Endothelial cell of umbilical vein (primary cell): ENCODE measurements at regions of chr7 and their contacts with region 1.

Region 1: DNA sequence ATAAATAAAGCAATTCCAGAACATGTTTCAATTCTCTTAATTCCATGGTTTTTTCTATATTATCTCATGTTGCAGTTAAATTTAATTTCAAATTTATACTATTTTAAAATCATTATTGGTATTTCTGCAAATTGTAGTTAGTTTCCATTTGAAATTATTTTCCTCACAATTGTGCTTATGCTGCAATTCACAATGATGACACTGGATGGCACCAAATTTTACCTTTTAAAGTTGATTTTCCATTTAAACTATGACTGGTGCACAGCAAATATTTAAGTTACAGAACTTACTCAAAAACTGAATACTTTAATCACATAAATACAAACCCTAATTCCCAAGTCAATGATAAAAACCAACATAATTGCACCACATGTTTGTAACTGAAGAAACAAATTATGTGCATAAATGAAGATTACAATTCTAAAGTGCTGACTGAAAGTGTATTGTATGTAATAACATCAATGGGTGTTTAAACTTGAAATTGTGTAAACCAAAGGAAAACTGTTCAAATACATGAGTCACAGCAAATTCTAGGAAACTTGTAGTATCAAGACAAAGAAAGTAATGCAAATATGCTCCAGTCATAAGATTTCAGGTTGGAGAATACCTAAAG is 75.3 kb upstream of the AASS start:
- DNase-seq: peak; percentile 56
- H3K4me3 ChIP-seq: no peak overlapping the region
- H3K27ac ChIP-seq: no peak overlapping the region
- H3K4me1 ChIP-seq: no peaks in the 10 kb centered on the region
- H3K27me3 ChIP-seq: no peaks in the 10 kb centered on the region
- CTCF ChIP-seq: peak; percentile 30 to 33
- POLR2A ChIP-seq: no peak

Region 2: GRCh38 chr7:122014697-122015096 is 204.7 kb before region 1 on chr7:
- CTCF ChIA-PET with region 1: no interaction called
- POLR2A ChIA-PET with region 1: no interaction called
- dilution Hi-C with region 1: no loop called
- intact Hi-C with region 1: loop called (anchors 5 kb)
- DNase-seq: peak; percentile 7
- H3K4me3 ChIP-seq: no peak overlapping the region
- H3K27ac ChIP-seq: no peak overlapping the region
- H3K4me1 ChIP-seq: no peaks in the 10 kb centered on the region
- H3K27me3 ChIP-seq: no peaks in the 10 kb centered on the region
- CTCF ChIP-seq: no peak
- POLR2A ChIP-seq: no peak